ENCODE measurements at regions of chr4 and their contacts with region 1.

Region 1: GRCh38 chr4:180031330-180031729 is 2211.9 kb upstream of the TENM3 start:
- DNase-seq: no peak
- CTCF ChIP-seq: no peak

Region 2: GRCh38 chr4:179417356-179417755 is 614.0 kb before region 1 on chr4:
- in situ Hi-C with region 1: no loop called
- DNase-seq: no peak
- CTCF ChIP-seq: no peak

Region 3: DNA sequence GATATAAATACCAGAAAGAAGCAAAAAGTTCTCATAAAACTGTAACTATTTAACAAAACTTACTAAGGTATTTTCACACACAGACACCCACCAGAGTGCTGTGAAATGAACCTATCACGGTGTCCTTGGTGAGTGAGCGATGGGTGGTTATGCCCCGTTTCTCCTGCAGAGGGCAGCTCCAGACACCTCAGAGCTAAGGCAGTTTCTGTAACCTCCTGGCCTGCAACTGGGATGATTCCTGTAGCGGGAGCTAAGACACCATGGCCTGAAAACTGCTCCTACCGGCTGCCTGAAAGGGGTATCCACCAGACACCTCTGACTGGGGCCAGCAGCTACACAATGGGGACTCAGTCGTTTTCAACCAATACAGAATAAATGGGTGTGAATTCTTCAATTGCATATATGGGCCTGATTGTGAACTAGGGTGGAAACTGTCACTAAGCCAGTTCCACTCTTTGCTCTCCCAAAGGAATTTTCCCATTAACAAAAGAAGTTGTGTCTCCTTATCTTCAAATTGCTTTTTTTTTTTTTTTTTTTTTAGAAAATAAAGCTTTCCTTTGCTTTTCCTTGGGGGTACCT is 163.9 kb before region 1 on chr4:
- in situ Hi-C with region 1: loop called (anchors 10 kb)
- DNase-seq: peak; percentile 45
- CTCF ChIP-seq: peak; percentile 90

Measured in GM13977 (cell line).